IMR-90 (cell line): ENCODE measurements at regions of chr4 and their contacts with region 1.

Region 1: DNA sequence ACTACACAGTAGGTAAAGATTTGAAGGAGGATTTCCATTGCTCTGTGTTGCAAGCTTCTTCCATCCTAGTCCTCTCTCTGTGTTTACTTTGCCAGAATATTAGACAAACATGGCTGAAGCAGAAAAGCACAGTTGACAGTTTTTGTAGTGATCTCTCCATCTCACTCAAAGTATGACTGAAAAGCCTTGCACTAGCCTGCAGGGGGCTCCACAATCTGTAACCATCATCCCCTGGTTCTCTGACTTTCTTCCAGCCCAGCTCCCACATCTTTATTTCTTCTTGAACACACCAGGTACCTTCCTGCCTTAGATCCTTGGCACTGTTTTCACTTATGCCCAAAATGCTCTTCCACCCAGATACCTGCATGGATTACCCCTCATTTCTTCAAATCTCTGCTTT is 34.1 kb upstream of the HHIP start:
- DNase-seq: peak; percentile 11
- ATAC-seq: no peak; the same call in 1 of the 2 replicates
- H3K4me3 ChIP-seq: no peak overlapping the region
- H3K27ac ChIP-seq: no peak overlapping the region
- H3K4me1 ChIP-seq: peaks cover 1% of the 10 kb centered on the region; the same call in 1 of the 2 replicates
- H3K27me3 ChIP-seq: no peaks in the 10 kb centered on the region
- CTCF ChIP-seq: peak; percentile 48
- POLR2A ChIP-seq: no peak
- RAD21 ChIP-seq: peak; percentile 41

Region 2: GRCh38 chr4:144754562-144755410 is 142.9 kb after region 1 on chr4:
- CTCF ChIA-PET with region 1: no interaction called
- POLR2A ChIA-PET with region 1: no interaction called
- dilution Hi-C with region 1: no loop called
- in situ Hi-C with region 1: no loop called
- intact Hi-C with region 1: loop called (anchors 1 kb)
- DNase-seq: peak; percentile 49
- ATAC-seq: peak; percentile 70
- H3K4me3 ChIP-seq: no peak overlapping the region
- H3K27ac ChIP-seq: no peak overlapping the region
- H3K4me1 ChIP-seq: no peaks in the 10 kb centered on the region
- H3K27me3 ChIP-seq: no peaks in the 10 kb centered on the region
- CTCF ChIP-seq: peak; percentile 73
- POLR2A ChIP-seq: no peak
- RAD21 ChIP-seq: peak; percentile 80

Region 3: DNA sequence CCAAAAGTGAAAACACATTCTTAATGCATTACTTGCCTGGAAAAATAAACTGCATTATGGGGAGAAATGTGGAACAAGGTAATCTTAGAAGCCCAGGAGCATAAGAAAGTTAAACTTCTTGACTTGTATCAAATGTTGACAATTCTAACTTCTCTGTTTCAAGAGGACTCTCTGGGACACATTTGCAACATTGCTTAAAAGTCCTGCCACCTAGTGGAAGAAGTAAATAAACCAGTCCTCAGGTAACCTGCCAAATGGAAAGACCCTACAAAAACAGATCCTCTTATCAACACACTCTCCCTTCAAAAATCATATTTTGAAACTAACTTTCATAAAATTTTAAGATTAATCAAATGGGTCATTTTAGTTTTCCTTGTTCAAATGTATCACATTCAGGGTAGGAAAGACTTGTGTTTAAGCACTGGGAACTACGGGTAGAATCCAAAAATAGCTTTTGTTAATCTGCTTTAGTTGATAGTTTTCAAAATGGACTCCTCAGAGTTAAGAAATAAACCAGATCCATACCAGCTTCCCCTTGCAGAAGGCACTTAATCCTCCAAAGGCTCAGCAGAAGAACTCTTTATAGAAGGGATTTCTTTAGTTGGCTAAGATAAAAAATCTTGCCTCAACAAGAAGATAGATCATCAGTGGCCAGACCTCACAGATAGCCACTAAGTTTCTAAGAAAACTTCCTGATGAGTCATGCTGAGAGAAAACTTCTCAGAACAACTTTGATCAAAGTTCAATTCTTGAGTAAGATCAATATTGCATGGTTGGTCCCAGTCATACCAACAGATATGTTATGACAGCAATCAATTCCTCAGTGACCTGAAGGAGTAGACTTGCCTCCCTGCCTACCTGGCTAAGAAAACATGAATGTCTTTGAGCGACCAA is 175.8 kb after region 1 on chr4:
- CTCF ChIA-PET with region 1: no interaction called
- POLR2A ChIA-PET with region 1: no interaction called
- dilution Hi-C with region 1: no loop called
- in situ Hi-C with region 1: no loop called
- intact Hi-C with region 1: loop called (anchors 1 kb)
- DNase-seq: peak; percentile 49
- ATAC-seq: no peak
- H3K4me3 ChIP-seq: no peak overlapping the region
- H3K27ac ChIP-seq: no peak overlapping the region
- H3K4me1 ChIP-seq: no peaks in the 10 kb centered on the region
- H3K27me3 ChIP-seq: no peaks in the 10 kb centered on the region; the same call in 1 of the 2 replicates
- CTCF ChIP-seq: peak; percentile 48
- POLR2A ChIP-seq: no peak
- RAD21 ChIP-seq: peak; percentile 60

Region 4: DNA sequence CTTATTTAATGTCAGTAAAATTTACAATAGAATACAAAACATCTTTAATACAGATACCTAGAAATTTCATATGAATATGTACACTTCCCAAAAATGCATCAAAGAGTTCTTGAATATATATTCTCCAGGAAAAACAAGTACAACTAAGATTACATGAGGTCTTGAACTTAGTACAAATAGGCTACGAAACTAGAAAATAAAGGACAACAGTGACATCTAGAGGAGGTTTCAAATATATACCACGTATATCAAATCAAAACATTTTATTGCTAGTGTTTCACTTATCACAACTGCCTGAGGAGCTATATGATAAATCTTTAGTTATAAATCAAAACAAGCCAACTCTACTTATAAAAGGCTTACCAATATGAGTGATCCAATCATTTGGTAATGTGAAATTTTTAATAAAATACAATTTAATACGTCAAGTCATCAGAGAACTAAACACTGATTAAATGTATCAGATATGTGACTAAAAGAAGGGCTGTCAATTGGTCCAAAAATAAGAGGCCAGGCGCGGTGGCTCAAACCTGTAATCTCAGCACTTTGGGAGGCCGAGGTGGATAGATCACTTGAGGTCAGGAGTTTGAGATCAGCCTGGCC is 449.6 kb after region 1 on chr4:
- CTCF ChIA-PET with region 1: no interaction called
- POLR2A ChIA-PET with region 1: no interaction called
- dilution Hi-C with region 1: no loop called
- in situ Hi-C with region 1: no loop called
- intact Hi-C with region 1: loop called (anchors 2 kb)
- DNase-seq: peak; percentile 67
- ATAC-seq: peak; percentile 77
- H3K4me3 ChIP-seq: no peak overlapping the region
- H3K27ac ChIP-seq: no peak overlapping the region
- H3K4me1 ChIP-seq: no peaks in the 10 kb centered on the region
- H3K27me3 ChIP-seq: no peaks in the 10 kb centered on the region
- CTCF ChIP-seq: peak; percentile 55
- POLR2A ChIP-seq: no peak
- RAD21 ChIP-seq: peak; percentile 67